Caco-2 (cell line): ENCODE measurements at regions of chr12 and their contacts with region 1.

Region 1: DNA sequence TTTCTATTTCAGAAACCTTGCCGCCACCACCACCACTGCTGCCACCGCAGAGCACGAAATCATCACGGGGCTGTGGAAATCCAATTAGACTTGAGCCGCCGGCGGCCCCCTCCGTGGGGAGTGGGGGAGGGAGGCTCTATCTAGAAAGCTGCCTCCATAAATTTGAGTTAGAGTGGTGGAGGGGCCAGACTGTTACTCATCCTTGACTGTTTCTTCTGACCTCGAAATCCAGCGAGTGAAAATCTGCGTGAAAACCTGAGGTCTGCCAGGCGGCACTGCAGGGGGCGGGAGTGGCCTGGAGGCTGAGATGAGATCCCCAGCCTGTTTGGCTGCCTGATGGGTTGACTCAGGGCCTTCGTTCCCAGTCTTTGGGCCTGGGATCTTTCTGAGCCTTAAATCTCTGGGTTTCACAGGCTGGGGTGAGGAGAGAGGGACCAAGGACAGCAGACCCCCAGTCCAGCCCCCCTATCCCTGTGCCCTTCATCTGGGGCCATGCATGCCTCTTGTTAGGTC is 29.9 kb downstream of the TSPAN9 start:
- DNase-seq: no peak
- H3K4me3 ChIP-seq: no peak overlapping the region
- H3K4me3 Mint-ChIP-seq: no peak overlapping the region
- H3K27ac Mint-ChIP-seq: no peak overlapping the region
- H3K4me1 ChIP-seq: peaks cover 25% of the 10 kb centered on the region
- H3K4me1 Mint-ChIP-seq: peaks cover 31% of the 10 kb centered on the region
- H3K27me3 ChIP-seq: no peaks in the 10 kb centered on the region
- H3K27me3 Mint-ChIP-seq: no peaks in the 10 kb centered on the region
- CTCF ChIP-seq: no peak

Region 2: GRCh38 chr12:3119748-3120601 is 12.8 kb after region 1 on chr12:
- CTCF ChIA-PET with region 1: interaction called, 3 read pairs
- POLR2A ChIA-PET with region 1: no interaction called
- intact Hi-C with region 1: loop called (anchors 2 kb)
- DNase-seq: no peak
- H3K4me3 ChIP-seq: no peak overlapping the region
- H3K4me3 Mint-ChIP-seq: no peak overlapping the region
- H3K27ac Mint-ChIP-seq: peak overlapping the region; percentile 14
- H3K4me1 ChIP-seq: no peaks in the 10 kb centered on the region
- H3K4me1 Mint-ChIP-seq: no peaks in the 10 kb centered on the region
- H3K27me3 ChIP-seq: no peaks in the 10 kb centered on the region
- H3K27me3 Mint-ChIP-seq: no peaks in the 10 kb centered on the region
- CTCF ChIP-seq: no peak

Region 3: DNA sequence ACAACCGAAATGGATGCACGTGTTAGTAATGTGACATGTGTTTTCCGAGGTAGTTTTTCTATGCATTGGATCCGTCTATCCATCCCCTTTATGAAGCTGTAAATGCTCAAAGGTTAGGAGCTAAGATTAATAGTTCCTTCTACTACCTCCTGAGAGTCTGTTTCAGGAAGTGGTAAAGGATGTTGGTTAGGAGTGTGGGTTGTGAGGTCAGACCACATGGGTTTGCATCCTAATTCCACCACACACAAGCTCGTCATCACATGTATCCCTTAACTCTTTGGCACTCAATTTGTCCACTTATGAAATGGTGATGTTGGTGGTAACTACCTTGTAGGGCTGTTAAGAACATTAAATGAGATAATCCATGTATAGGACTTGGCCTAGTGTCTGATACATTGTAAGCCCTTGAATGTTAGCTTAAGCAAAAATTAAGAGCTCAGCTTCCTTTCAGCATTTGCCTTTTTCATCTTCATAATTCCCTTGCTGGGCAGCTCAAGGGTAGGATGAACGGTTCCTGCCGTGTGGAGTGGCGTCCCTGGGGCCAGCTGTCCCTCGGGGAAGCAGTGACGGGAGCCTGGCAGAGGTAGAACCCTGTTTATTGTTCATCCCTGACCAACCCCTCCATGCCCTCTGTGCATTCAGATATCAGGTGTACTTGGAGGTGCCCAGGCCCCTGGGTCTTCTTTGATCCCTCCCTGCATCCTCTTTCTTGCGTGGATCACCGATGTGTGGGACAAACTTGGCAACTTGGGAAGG is 22.4 kb after region 1 on chr12:
- CTCF ChIA-PET with region 1: interaction called, 10 read pairs
- POLR2A ChIA-PET with region 1: no interaction called
- intact Hi-C with region 1: loop called (anchors 2 kb)
- DNase-seq: no peak
- H3K4me3 ChIP-seq: no peak overlapping the region
- H3K4me3 Mint-ChIP-seq: no peak overlapping the region
- H3K27ac Mint-ChIP-seq: no peak overlapping the region
- H3K4me1 ChIP-seq: no peaks in the 10 kb centered on the region
- H3K4me1 Mint-ChIP-seq: no peaks in the 10 kb centered on the region
- H3K27me3 ChIP-seq: no peaks in the 10 kb centered on the region
- H3K27me3 Mint-ChIP-seq: no peaks in the 10 kb centered on the region
- CTCF ChIP-seq: no peak